Posterior cingulate gyrus (tissue), 11 donors: ENCODE measurements at regions of chr16 and their contacts with region 1.

Region 1: DNA sequence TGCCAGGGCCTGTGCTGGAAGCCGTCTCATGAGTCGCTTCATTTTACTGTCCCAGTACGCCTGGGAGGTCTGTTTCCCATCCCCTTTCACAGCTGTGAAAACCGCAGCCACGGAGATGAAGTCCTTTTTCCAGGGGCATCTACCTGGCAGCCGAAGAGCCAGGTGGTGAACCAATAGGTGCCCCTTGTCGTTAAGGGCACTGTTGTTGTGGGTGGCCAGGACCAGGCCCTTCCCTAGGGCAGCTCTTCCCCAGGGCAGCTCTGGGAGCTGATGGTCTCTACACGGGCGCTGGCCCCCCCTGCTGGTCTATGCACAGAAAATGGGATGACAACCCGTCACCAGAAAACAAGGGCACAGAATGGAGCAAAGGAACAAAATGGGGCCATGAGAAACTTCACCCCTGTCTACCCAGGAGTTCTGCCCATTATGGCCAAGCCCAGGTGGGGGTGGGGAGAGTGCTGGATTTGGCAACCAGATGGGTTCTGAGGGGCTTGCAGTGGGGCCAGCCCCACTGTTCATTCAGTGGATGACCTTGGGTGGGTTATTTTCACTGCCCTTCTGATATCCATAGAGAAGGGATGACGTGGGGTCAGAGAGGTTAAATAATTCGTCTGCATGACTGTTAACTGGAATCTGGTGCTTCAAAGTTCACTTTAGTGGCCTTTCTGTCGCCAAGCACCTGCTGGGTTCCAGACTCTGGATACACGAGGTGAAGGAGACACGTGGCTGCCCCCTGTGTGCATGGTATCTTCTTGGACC is 11.5 kb downstream of the RMI2 start:
- DNase-seq: peak in 8 of 10 donors; percentile 28 to 91 (median 54)

Region 2: GRCh38 chr16:10964039-10964890 is 392.5 kb before region 1 on chr16:
- intact Hi-C with region 1: loop called (anchors 2 kb)
- DNase-seq: peak; percentile 63 to 97 (median 87)